ENCODE measurements at regions of chr7 and their contacts with region 1.

Region 1: DNA sequence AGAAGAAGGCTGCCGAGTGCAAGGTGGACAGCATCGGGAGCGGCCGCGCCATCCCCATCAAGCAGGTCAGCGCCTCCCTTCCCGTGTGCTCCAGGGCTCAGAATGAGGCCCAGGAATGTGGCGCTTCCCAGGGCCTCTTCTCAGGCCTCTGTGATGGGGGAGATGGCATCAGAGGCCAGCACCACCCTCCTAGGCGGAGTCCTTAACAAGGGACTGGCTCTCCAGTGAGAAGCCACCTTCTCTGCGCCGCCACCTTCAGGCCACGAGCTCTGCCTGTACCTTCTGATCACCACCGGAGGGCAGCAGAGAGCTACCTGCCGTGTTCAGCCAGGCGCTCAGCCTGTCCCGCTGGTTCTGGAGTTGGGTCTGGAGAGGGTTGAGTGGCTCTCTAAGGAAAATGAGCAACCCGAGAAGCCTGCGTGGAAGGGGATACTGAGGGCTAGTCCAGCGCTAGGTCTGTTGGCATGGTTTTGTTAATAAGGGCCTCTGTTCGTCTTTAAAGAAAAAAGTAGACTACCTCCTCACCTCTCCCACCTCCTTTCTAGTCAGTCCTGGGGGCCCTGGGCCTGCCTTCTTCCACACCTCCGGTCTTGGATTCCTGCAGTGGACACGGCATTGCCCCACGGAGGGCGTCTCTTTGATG is 37.7 kb downstream of the AGAP3 start:
- DNase-seq: peak; percentile 61 to 89
- H3K4me3 ChIP-seq: no peak overlapping the region
- H3K27ac ChIP-seq: no peak overlapping the region
- H3K4me1 ChIP-seq: peaks cover 0 to 22% (median 11%) of the 10 kb centered on the region in 4 donors
- H3K27me3 ChIP-seq: no peaks in the 10 kb centered on the region
- CTCF ChIP-seq: peak; percentile 92 to 99

Region 2: DNA sequence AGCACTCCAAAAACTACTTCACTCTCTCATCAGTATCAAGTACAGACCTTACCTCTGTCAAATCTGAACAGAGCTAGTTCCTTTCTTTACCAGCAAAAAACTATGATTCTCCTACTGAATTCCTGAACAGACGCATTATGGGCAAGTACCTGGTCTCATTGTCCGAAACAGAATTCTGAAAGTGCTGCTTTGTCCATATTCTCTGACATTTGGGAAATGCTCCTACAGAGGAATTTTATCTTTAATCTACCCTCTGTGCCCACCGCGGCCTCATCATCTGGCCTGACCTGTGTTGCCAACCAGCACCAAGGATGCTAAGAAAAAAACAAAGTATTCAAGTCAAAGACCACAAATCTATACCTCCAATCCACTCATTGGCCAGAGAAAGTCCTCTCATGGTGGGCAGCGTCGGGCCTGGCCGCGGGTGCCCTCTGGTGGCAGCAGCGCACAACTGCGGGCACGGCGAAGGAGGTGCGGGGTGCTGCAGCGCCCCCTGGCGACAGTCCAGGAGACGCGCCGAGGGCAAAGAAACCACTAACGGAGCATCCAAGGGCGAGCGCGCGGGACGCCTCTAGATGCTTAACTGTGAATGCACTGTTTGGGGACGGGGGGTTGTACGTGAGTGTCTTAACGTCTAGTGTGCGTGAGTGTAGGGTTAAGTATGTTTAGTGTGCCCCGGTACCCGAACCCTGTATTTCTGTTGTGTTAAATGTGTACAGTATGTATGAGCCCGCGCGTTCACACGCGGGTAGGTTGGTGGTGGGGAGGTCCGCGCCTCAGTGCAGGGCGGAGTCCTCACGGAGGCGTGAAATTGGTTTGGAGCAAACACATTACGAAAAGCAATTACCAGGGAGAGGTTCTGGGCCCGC is 48.6 kb after region 1 on chr7:
- intact Hi-C with region 1: loop called (anchors 2 kb)
- DNase-seq: peak; percentile 63 to 82
- H3K4me3 ChIP-seq: no peak overlapping the region
- H3K27ac ChIP-seq: no peak overlapping the region
- H3K4me1 ChIP-seq: peaks cover 0 to 9% (median 8%) of the 10 kb centered on the region in 4 donors
- H3K27me3 ChIP-seq: peaks cover 0 to 77% of the 10 kb centered on the region in 2 donors
- CTCF ChIP-seq: peak; percentile 100

Measured in tibial artery (tissue), 4 donors.